Astrocyte of the cerebellum (primary cell): ENCODE measurements at regions of chr10 and their contacts with region 1.

Region 1: GRCh38 chr10:111481261-111481826 is 404.5 kb downstream of the ADRA2A start:
- DNase-seq: no peak
- H3K4me3 ChIP-seq: no peak overlapping the region
- CTCF ChIP-seq: no peak

Region 2: GRCh38 chr10:111392159-111392558 is 89.2 kb before region 1 on chr10:
- in situ Hi-C with region 1: loop called (anchors 25 kb)
- DNase-seq: no peak
- H3K4me3 ChIP-seq: no peak overlapping the region
- CTCF ChIP-seq: no peak

Region 3: GRCh38 chr10:111516144-111516543 is 34.8 kb after region 1 on chr10:
- in situ Hi-C with region 1: loop called (anchors 5 kb)
- DNase-seq: no peak
- H3K4me3 ChIP-seq: no peak overlapping the region
- CTCF ChIP-seq: no peak

Region 4: GRCh38 chr10:111531690-111532089 is 50.3 kb after region 1 on chr10:
- in situ Hi-C with region 1: no loop called
- DNase-seq: no peak
- H3K4me3 ChIP-seq: no peak overlapping the region
- CTCF ChIP-seq: no peak